Ovary (tissue), 10 donors: ENCODE measurements at regions of chr9 and their contacts with region 1.

Region 1: GRCh38 chr9:128881901-128882681 is at the starts of genes KYAT1 and LRRC8A:
- DNase-seq: peak; percentile 97 to 98 (median 97)
- H3K4me3 ChIP-seq: peak within 1 kb of the TSS; percentile 92
- H3K27ac ChIP-seq: peak within 1 kb of the TSS; percentile 99 to 100
- H3K4me1 ChIP-seq: peaks cover 11% of the 10 kb centered on the region
- H3K27me3 ChIP-seq: no peaks in the 10 kb centered on the region
- CTCF ChIP-seq: peak in 1 of 3 donors; percentile 44
- EP300 ChIP-seq: no peak
- POLR2A ChIP-seq: peak; percentile 59
- total RNA-seq, gene KYAT1: 4.6 to 10.2 (median 6.1) TPM
- total RNA-seq, gene LRRC8A: 18.1 to 39.7 (median 26.4) TPM

Region 2: GRCh38 chr9:128829477-128830251 is 52.4 kb before region 1 on chr9 and contains the start of gene SPOUT1:
- intact Hi-C with region 1: no loop called
- DNase-seq: peak; percentile 89 to 95 (median 92)
- H3K4me3 ChIP-seq: peak within 1 kb of the TSS; percentile 97
- H3K27ac ChIP-seq: peak within 1 kb of the TSS; percentile 2 to 48
- H3K4me1 ChIP-seq: peaks cover 4% of the 10 kb centered on the region
- H3K27me3 ChIP-seq: no peaks in the 10 kb centered on the region
- CTCF ChIP-seq: no peak
- EP300 ChIP-seq: no peak
- POLR2A ChIP-seq: peak; percentile 43
- total RNA-seq, gene SPOUT1: 10.7 to 47.9 (median 26.5) TPM

Region 3: GRCh38 chr9:128917151-128917849 is 35.2 kb after region 1 on chr9:
- intact Hi-C with region 1: loop called in 3 of 4 experiments (anchors 5 kb)
- DNase-seq: peak; percentile 92 to 96 (median 93)
- H3K4me3 ChIP-seq: peak overlapping the region; percentile 9
- H3K27ac ChIP-seq: peak overlapping the region; percentile 84 to 95
- H3K4me1 ChIP-seq: peaks cover 44% of the 10 kb centered on the region
- H3K27me3 ChIP-seq: no peaks in the 10 kb centered on the region
- CTCF ChIP-seq: no peak
- EP300 ChIP-seq: no peak
- POLR2A ChIP-seq: no peak

Region 4: GRCh38 chr9:128927731-128928411 is 45.8 kb after region 1 on chr9:
- intact Hi-C with region 1: no loop called
- DNase-seq: peak; percentile 48 to 70 (median 63)
- H3K4me3 ChIP-seq: no peak overlapping the region
- H3K27ac ChIP-seq: no peak overlapping the region
- H3K4me1 ChIP-seq: peaks cover 2% of the 10 kb centered on the region
- H3K27me3 ChIP-seq: no peaks in the 10 kb centered on the region
- CTCF ChIP-seq: peak; percentile 82 to 93 (median 90)
- EP300 ChIP-seq: no peak
- POLR2A ChIP-seq: no peak